ENCODE measurements at regions of chr18 and their contacts with region 1.

Region 1: GRCh38 chr18:36015629-36016028 is 43.1 kb downstream of the RMP24 start:
- DNase-seq: no peak
- ATAC-seq: no peak
- H3K4me3 ChIP-seq: no peak overlapping the region
- H3K4me3 Mint-ChIP-seq: no peak overlapping the region
- H3K27ac ChIP-seq: no peak overlapping the region
- H3K27ac Mint-ChIP-seq: no peak overlapping the region
- H3K4me1 ChIP-seq: no peaks in the 10 kb centered on the region
- H3K4me1 Mint-ChIP-seq: peaks cover 8% of the 10 kb centered on the region
- H3K27me3 ChIP-seq: no peaks in the 10 kb centered on the region
- H3K27me3 Mint-ChIP-seq: no peaks in the 10 kb centered on the region
- CTCF ChIP-seq: no peak

Region 2: GRCh38 chr18:35756506-35757117 is 259.0 kb before region 1 on chr18:
- CTCF ChIA-PET with region 1: no interaction called
- POLR2A ChIA-PET with region 1: no interaction called
- intact Hi-C with region 1: loop called in 1 of 2 experiments (anchors 5 kb)
- DNase-seq: peak in 8 of 9 experiments; percentile 35 to 64 (median 54)
- ATAC-seq: peak; percentile 40
- H3K4me3 ChIP-seq: no peak overlapping the region
- H3K4me3 Mint-ChIP-seq: no peak overlapping the region
- H3K27ac ChIP-seq: no peak overlapping the region
- H3K27ac Mint-ChIP-seq: no peak overlapping the region
- H3K4me1 ChIP-seq: no peaks in the 10 kb centered on the region
- H3K4me1 Mint-ChIP-seq: no peaks in the 10 kb centered on the region
- H3K27me3 ChIP-seq: peaks cover 0 to 8% of the 10 kb centered on the region in 2 experiments
- H3K27me3 Mint-ChIP-seq: peaks cover 24% of the 10 kb centered on the region
- CTCF ChIP-seq: peak; percentile 84

Region 3: GRCh38 chr18:35864916-35865315 is 150.7 kb before region 1 on chr18:
- CTCF ChIA-PET with region 1: no interaction called
- POLR2A ChIA-PET with region 1: no interaction called
- intact Hi-C with region 1: no loop called
- DNase-seq: no peak
- ATAC-seq: no peak
- H3K4me3 ChIP-seq: no peak overlapping the region
- H3K4me3 Mint-ChIP-seq: no peak overlapping the region
- H3K27ac ChIP-seq: no peak overlapping the region
- H3K27ac Mint-ChIP-seq: no peak overlapping the region
- H3K4me1 ChIP-seq: no peaks in the 10 kb centered on the region
- H3K4me1 Mint-ChIP-seq: no peaks in the 10 kb centered on the region
- H3K27me3 ChIP-seq: no peaks in the 10 kb centered on the region
- H3K27me3 Mint-ChIP-seq: no peaks in the 10 kb centered on the region
- CTCF ChIP-seq: no peak

Region 4: GRCh38 chr18:36095936-36096519 is 80.4 kb after region 1 on chr18:
- CTCF ChIA-PET with region 1: interaction called, 9 read pairs
- POLR2A ChIA-PET with region 1: no interaction called
- intact Hi-C with region 1: loop called (anchors 1 to 2 kb)
- DNase-seq: peak in 2 of 9 experiments; percentile 55 to 67
- ATAC-seq: peak; percentile 46
- H3K4me3 ChIP-seq: no peak overlapping the region
- H3K4me3 Mint-ChIP-seq: no peak overlapping the region
- H3K27ac ChIP-seq: no peak overlapping the region
- H3K27ac Mint-ChIP-seq: no peak overlapping the region
- H3K4me1 ChIP-seq: no peaks in the 10 kb centered on the region
- H3K4me1 Mint-ChIP-seq: peaks cover 10% of the 10 kb centered on the region
- H3K27me3 ChIP-seq: no peaks in the 10 kb centered on the region
- H3K27me3 Mint-ChIP-seq: no peaks in the 10 kb centered on the region
- CTCF ChIP-seq: peak; percentile 72

Region 5: DNA sequence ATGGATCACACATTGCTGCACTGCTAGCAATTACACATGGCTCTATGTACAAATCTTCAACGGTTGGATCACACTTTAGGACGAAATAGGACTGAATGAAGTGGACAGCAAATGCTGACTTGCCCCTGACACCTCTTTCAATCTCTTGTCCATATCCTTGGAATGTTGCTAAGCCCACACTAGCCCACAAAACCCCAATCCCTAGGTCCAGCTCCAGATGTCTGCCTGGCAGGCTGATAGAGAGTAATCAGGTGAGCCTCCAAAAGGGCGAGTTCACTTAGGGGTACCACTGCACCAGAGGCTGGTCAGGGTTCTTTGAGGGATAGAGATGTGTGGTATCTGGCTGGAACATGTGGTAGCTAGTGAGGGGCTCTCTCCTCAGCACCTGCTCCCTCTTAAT is 263.4 kb after region 1 on chr18:
- CTCF ChIA-PET with region 1: interaction called, 66 read pairs
- POLR2A ChIA-PET with region 1: no interaction called
- intact Hi-C with region 1: loop called (anchors 1 kb)
- DNase-seq: no peak
- ATAC-seq: no peak
- H3K4me3 ChIP-seq: no peak overlapping the region
- H3K4me3 Mint-ChIP-seq: no peak overlapping the region
- H3K27ac ChIP-seq: no peak overlapping the region
- H3K27ac Mint-ChIP-seq: no peak overlapping the region
- H3K4me1 ChIP-seq: no peaks in the 10 kb centered on the region
- H3K4me1 Mint-ChIP-seq: no peaks in the 10 kb centered on the region
- H3K27me3 ChIP-seq: peaks cover 0 to 2% of the 10 kb centered on the region in 2 experiments
- H3K27me3 Mint-ChIP-seq: peaks cover 16% of the 10 kb centered on the region
- CTCF ChIP-seq: no peak

Region 6: GRCh38 chr18:36411745-36412168 is 396.1 kb after region 1 on chr18:
- CTCF ChIA-PET with region 1: interaction called, 4 read pairs
- POLR2A ChIA-PET with region 1: no interaction called
- intact Hi-C with region 1: loop called in 1 of 2 experiments (anchors 5 kb)
- DNase-seq: no peak
- ATAC-seq: no peak
- H3K4me3 ChIP-seq: no peak overlapping the region
- H3K4me3 Mint-ChIP-seq: no peak overlapping the region
- H3K27ac ChIP-seq: no peak overlapping the region
- H3K27ac Mint-ChIP-seq: no peak overlapping the region
- H3K4me1 ChIP-seq: no peaks in the 10 kb centered on the region
- H3K4me1 Mint-ChIP-seq: no peaks in the 10 kb centered on the region
- H3K27me3 ChIP-seq: no peaks in the 10 kb centered on the region
- H3K27me3 Mint-ChIP-seq: peaks cover 19% of the 10 kb centered on the region
- CTCF ChIP-seq: no peak

Region 7: GRCh38 chr18:36809590-36810381 is 794.2 kb after region 1 on chr18:
- CTCF ChIA-PET with region 1: interaction called, 7 read pairs
- POLR2A ChIA-PET with region 1: no interaction called
- intact Hi-C with region 1: loop called (anchors 1 kb)
- DNase-seq: peak in 8 of 9 experiments; percentile 2 to 77 (median 29)
- ATAC-seq: peak; percentile 98
- H3K4me3 ChIP-seq: no peak overlapping the region
- H3K4me3 Mint-ChIP-seq: no peak overlapping the region
- H3K27ac ChIP-seq: no peak overlapping the region
- H3K27ac Mint-ChIP-seq: no peak overlapping the region
- H3K4me1 ChIP-seq: no peaks in the 10 kb centered on the region
- H3K4me1 Mint-ChIP-seq: peaks cover 7% of the 10 kb centered on the region
- H3K27me3 ChIP-seq: no peaks in the 10 kb centered on the region
- H3K27me3 Mint-ChIP-seq: no peaks in the 10 kb centered on the region
- CTCF ChIP-seq: peak; percentile 92